Calu3 (cell line): ENCODE measurements at regions of chr9 and their contacts with region 1.

Region 1: DNA sequence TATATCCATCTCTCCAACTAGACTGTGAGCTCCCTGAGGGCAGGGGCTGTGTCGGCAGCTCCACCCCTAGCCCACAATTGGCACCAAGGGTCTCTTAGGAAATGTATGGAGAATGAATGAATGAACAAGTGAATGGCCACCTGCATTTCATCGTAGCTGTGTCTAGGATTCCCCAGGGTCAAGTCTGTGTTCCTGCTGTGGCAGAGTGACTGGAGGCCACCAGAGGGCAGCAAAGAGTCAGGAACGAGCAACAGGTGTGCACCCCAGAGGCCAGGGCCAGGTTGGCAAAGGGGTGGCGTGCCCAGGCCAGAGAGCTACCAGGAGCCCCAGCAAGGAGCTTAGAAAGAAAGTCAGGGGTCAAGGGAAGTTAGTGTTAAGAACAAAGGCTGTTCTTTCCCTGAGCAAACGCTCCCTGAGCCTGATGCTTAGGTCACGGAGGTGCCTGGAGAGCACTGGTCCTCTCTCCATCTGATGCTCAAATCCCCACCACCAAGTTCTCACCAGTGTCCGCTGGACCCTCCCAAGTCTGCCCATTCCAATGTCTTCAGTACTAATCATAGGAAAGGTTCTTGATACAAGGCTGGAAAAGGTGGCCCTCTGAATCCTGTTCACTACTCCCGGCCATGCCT is 160.7 kb downstream of the PAX5 start:
- DNase-seq: peak; percentile 56
- H3K4me3 Mint-ChIP-seq: no peak overlapping the region
- H3K27ac Mint-ChIP-seq: no peak overlapping the region
- H3K4me1 Mint-ChIP-seq: no peaks in the 10 kb centered on the region
- H3K27me3 Mint-ChIP-seq: peaks cover 27% of the 10 kb centered on the region
- CTCF ChIP-seq: peak; percentile 58

Region 2: DNA sequence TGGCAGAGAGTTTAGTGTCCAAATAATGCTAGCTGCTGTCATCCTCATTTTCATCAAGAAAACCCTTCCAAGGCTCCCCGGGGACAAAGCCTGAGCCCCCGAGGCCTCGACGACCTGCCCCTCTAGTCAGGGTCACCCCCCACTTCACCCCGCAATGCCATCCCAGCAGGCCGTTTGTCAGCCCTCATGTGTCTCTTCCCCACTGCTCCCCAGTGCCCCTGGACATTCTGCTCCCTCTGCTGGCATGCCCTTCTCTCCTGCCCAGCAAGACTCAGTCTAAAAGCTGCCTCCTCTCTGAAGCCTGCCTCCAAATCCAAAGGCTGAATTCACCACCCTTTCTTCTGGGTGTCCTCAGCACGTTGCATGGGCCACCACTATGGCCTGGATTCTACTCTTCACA is 101.4 kb after region 1 on chr9:
- CTCF ChIA-PET with region 1: interaction called, 5 read pairs
- intact Hi-C with region 1: loop called (anchors 5 kb)
- DNase-seq: no peak
- H3K4me3 Mint-ChIP-seq: no peak overlapping the region
- H3K27ac Mint-ChIP-seq: no peak overlapping the region
- H3K4me1 Mint-ChIP-seq: no peaks in the 10 kb centered on the region
- H3K27me3 Mint-ChIP-seq: peaks cover 12% of the 10 kb centered on the region
- CTCF ChIP-seq: no peak

Region 3: DNA sequence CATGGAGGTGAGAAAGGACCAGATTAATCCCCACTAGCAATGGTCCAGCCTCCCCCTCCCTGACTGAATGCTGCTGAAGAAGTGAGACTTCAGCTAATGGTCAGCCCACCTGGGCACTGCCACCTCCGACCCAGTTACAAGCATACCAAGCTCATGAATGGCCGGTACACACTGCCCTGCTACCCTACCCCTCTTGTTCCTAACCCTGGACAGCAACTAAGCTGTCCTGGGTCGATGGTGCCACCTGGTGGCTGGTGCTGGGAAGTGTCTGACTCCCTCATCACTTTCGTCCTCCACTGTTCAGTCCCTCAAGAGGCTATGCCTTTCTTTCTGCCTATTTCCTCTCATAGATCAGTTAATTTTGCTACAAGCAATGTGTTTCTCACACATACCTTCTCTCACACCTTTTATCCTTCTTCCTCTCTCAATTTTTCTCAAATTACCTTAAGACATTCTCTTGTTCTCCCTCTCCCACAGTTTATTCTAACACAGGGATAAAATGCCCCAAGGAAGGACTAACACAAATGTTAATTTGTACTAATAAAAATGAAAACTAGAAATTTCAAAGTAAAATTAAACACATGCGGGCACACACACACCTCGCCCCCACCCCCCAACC is 118.3 kb after region 1 on chr9:
- CTCF ChIA-PET with region 1: interaction called, 9 read pairs
- intact Hi-C with region 1: loop called (anchors 1 kb)
- DNase-seq: peak; percentile 33
- H3K4me3 Mint-ChIP-seq: no peak overlapping the region
- H3K27ac Mint-ChIP-seq: no peak overlapping the region
- H3K4me1 Mint-ChIP-seq: no peaks in the 10 kb centered on the region
- H3K27me3 Mint-ChIP-seq: peaks cover 56% of the 10 kb centered on the region
- CTCF ChIP-seq: no peak